ENCODE measurements at regions of chr12 and their contacts with region 1.

Region 1: DNA sequence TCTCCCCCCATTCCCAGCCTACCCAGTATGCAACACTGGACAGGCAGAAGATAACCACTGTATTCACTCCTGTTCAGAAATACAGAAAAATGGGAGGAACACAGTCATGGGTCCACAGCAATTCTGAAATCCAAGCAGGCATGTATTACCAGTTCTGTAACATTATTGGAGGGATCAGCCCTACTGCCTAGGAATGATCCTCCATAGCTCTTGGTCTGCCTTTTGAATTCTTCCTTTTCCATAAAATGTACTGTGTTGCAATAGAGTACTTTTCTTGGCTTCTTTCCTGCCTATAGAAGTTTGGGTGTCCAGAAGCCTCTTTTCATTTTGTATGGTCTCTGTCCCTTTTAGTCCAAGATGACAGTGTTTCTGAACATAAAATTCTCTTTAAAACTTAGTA is 46.5 kb downstream of the SPATS2 start:
- DNase-seq: no peak
- H3K4me3 ChIP-seq: no peak overlapping the region
- H3K27ac ChIP-seq: no peak overlapping the region
- H3K4me1 ChIP-seq: peaks cover 3% of the 10 kb centered on the region
- H3K27me3 ChIP-seq: no peaks in the 10 kb centered on the region
- CTCF ChIP-seq: no peak

Region 2: GRCh38 chr12:49170924-49171323 is 242.9 kb before region 1 on chr12:
- CTCF ChIA-PET with region 1: no interaction called
- POLR2A ChIA-PET with region 1: no interaction called
- intact Hi-C with region 1: no loop called
- DNase-seq: no peak
- H3K4me3 ChIP-seq: no peak overlapping the region
- H3K27ac ChIP-seq: no peak overlapping the region
- H3K4me1 ChIP-seq: no peaks in the 10 kb centered on the region
- H3K27me3 ChIP-seq: no peaks in the 10 kb centered on the region
- CTCF ChIP-seq: no peak

Region 3: GRCh38 chr12:49397000-49397399 is 16.8 kb before region 1 on chr12:
- CTCF ChIA-PET with region 1: interaction called, 12 read pairs
- POLR2A ChIA-PET with region 1: no interaction called
- intact Hi-C with region 1: no loop called
- DNase-seq: no peak
- H3K4me3 ChIP-seq: no peak overlapping the region
- H3K27ac ChIP-seq: no peak overlapping the region
- H3K4me1 ChIP-seq: no peaks in the 10 kb centered on the region
- H3K27me3 ChIP-seq: no peaks in the 10 kb centered on the region
- CTCF ChIP-seq: no peak

Measured in A673 (cell line).